Dendritic cell treated with granulocyte-macrophage colony-stimulating factor and Interleukin-4, amounts not matched to agents 40 ng/mL and 50 ng/mL, for 4 days (primary cell): ENCODE measurements at regions of chr22 and their contacts with region 1.

Region 1: GRCh38 chr22:40376149-40376548 is 5.8 kb downstream of the SGSM3 start:
- H3K4me3 Mint-ChIP-seq: no peak overlapping the region
- H3K27ac Mint-ChIP-seq: no peak overlapping the region
- H3K4me1 Mint-ChIP-seq: peaks cover 49% of the 10 kb centered on the region
- H3K27me3 Mint-ChIP-seq: no peaks in the 10 kb centered on the region

Region 2: GRCh38 chr22:40363059-40363458 is 13.1 kb before region 1 on chr22:
- intact Hi-C with region 1: no loop called
- H3K4me3 Mint-ChIP-seq: no peak overlapping the region
- H3K27ac Mint-ChIP-seq: no peak overlapping the region
- H3K4me1 Mint-ChIP-seq: peaks cover under 1% of the 10 kb centered on the region
- H3K27me3 Mint-ChIP-seq: no peaks in the 10 kb centered on the region

Region 3: GRCh38 chr22:40463017-40463631 is 87.0 kb after region 1 on chr22:
- intact Hi-C with region 1: loop called (anchors 10 kb)
- H3K4me3 Mint-ChIP-seq: peak overlapping the region; percentile 91
- H3K27ac Mint-ChIP-seq: peak overlapping the region; percentile 89
- H3K4me1 Mint-ChIP-seq: peaks cover 61% of the 10 kb centered on the region
- H3K27me3 Mint-ChIP-seq: no peaks in the 10 kb centered on the region

Region 4: GRCh38 chr22:40955571-40955970 is 579.4 kb after region 1 on chr22:
- intact Hi-C with region 1: no loop called
- H3K4me3 Mint-ChIP-seq: no peak overlapping the region
- H3K27ac Mint-ChIP-seq: no peak overlapping the region
- H3K4me1 Mint-ChIP-seq: peaks cover 22% of the 10 kb centered on the region
- H3K27me3 Mint-ChIP-seq: no peaks in the 10 kb centered on the region